ENCODE measurements at regions of chr4 and their contacts with region 1.

Region 1: GRCh38 chr4:90624781-90625180 is 497.6 kb downstream of the CCSER1 start:
- DNase-seq: peak; percentile 68
- H3K4me3 ChIP-seq: no peak overlapping the region
- H3K27ac ChIP-seq: no peak overlapping the region
- H3K4me1 ChIP-seq: peaks cover 20% of the 10 kb centered on the region
- H3K27me3 ChIP-seq: no peaks in the 10 kb centered on the region
- CTCF ChIP-seq: no peak
- POLR2A ChIP-seq: no peak

Region 2: DNA sequence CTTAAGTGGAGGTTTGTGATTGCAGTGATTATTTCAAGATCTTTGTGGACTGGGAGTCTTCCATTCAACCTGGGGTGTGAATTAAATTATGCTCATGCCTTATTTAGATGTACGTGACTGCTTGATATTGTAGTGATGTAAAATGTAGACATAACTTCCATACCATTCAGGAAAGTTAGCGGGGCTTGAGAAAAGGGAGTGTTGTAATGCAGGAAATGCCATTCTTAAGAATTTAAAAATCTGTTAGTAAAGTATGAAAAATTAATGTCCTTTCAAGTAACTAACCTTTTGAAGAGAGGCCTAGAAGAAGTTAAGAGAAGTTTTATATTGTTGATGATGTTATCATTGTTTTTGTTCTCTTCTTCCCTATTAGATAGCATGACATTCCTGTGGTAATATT is 179.4 kb before region 1 on chr4:
- CTCF ChIA-PET with region 1: no interaction called
- POLR2A ChIA-PET with region 1: no interaction called
- dilution Hi-C with region 1: no loop called
- intact Hi-C with region 1: loop called (anchors 10 kb)
- DNase-seq: peak; percentile 30
- H3K4me3 ChIP-seq: no peak overlapping the region
- H3K27ac ChIP-seq: no peak overlapping the region
- H3K4me1 ChIP-seq: peaks cover 27% of the 10 kb centered on the region
- H3K27me3 ChIP-seq: no peaks in the 10 kb centered on the region
- CTCF ChIP-seq: no peak
- POLR2A ChIP-seq: no peak

Region 3: GRCh38 chr4:90852237-90852636 is 227.5 kb after region 1 on chr4:
- CTCF ChIA-PET with region 1: no interaction called
- POLR2A ChIA-PET with region 1: no interaction called
- dilution Hi-C with region 1: no loop called
- intact Hi-C with region 1: loop called (anchors 5 kb)
- DNase-seq: no peak
- H3K4me3 ChIP-seq: no peak overlapping the region
- H3K27ac ChIP-seq: no peak overlapping the region
- H3K4me1 ChIP-seq: peaks cover 8% of the 10 kb centered on the region
- H3K27me3 ChIP-seq: no peaks in the 10 kb centered on the region
- CTCF ChIP-seq: no peak
- POLR2A ChIP-seq: no peak

Measured in endothelial cell of umbilical vein (primary cell).